ENCODE measurements at regions of chr4 and their contacts with region 1.

Region 1: GRCh38 chr4:84750253-84750959 is 167.5 kb downstream of the CDS1 start:
- DNase-seq: no peak
- ATAC-seq: peak; percentile 70
- H3K4me3 ChIP-seq: no peak overlapping the region
- H3K4me1 ChIP-seq: no peaks in the 10 kb centered on the region
- CTCF ChIP-seq: peak; percentile 14

Region 2: GRCh38 chr4:83757121-83757621 is 993.2 kb before region 1 on chr4:
- intact Hi-C with region 1: no loop called
- DNase-seq: no peak
- ATAC-seq: no peak
- H3K4me3 ChIP-seq: no peak overlapping the region
- H3K4me1 ChIP-seq: no peaks in the 10 kb centered on the region
- CTCF ChIP-seq: no peak

Region 3: GRCh38 chr4:84971319-84971932 is 221.0 kb after region 1 on chr4:
- intact Hi-C with region 1: loop called (anchors 5 kb)
- DNase-seq: no peak
- ATAC-seq: no peak
- H3K4me3 ChIP-seq: no peak overlapping the region
- H3K4me1 ChIP-seq: no peaks in the 10 kb centered on the region
- CTCF ChIP-seq: peak; percentile 11

Region 4: DNA sequence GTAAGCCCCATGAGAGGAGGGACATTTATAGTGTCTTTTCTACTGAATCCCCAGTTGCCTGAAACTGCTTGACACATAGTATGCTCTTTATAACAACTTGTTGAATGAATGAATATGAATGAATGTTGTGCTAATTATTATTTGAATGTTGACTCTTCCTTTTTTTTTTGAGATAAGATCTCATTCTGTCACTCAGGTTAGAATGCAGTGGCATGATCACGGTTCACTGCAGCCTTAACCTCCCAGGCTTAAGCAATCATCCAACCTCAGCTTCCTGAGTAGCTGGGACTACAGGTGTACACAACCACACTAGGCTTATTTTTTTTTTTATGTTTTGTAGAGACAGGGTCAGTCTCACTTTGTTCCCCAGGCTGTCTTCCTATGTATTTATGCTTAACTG is 330.7 kb after region 1 on chr4:
- intact Hi-C with region 1: no loop called
- DNase-seq: no peak
- ATAC-seq: no peak
- H3K4me3 ChIP-seq: no peak overlapping the region
- H3K4me1 ChIP-seq: no peaks in the 10 kb centered on the region
- CTCF ChIP-seq: no peak

Region 5: DNA sequence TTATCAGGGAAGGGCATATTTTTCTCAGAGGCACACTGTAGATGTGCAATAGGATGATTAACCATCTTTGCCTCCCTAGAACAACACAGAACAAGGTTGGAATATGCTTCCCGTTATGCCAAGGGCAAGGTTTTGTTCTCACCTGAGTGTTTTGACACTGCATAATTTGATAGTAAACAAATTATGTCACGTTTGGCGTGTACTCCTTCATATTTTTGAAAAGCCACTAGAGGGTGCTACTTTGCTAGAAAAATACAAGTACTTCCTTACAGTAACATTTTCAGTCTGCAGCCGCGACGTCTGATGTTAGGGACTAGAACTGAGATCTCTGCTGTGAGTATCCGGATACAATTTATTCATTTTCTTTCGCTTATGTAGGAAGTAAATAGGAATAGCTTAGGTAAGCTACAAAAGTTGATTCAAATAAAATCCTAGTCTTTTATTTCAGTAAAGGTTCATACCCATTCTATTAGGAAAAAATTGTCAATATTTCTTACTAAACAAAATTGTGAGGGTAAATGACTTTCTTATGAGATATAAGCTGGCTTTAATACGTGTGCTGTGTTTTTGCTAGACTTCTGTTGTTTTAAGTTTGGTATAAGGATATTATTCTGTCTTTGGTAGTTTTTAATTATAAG is 397.2 kb after region 1 on chr4:
- intact Hi-C with region 1: no loop called
- DNase-seq: peak in 1 of 3 donors; percentile 64
- ATAC-seq: peak; percentile 72
- H3K4me3 ChIP-seq: no peak overlapping the region
- H3K4me1 ChIP-seq: no peaks in the 10 kb centered on the region
- CTCF ChIP-seq: peak; percentile 18